Body of pancreas (tissue), 4 donors: ENCODE measurements at regions of chr1 and their contacts with region 1.

Region 1: GRCh38 chr1:1059494-1060280 is 14.4 kb downstream of the RNF223 start:
- DNase-seq: peak; percentile 91 to 95 (median 92)
- ATAC-seq: peak; percentile 86
- H3K4me3 ChIP-seq: peak overlapping the region in 1 of 2 donors; percentile 38
- H3K27ac ChIP-seq: no peak overlapping the region
- H3K4me1 ChIP-seq: peaks cover 37% of the 10 kb centered on the region
- H3K27me3 ChIP-seq: peaks cover 0 to 14% of the 10 kb centered on the region in 2 donors
- CTCF ChIP-seq: peak in 1 of 7 experiments; percentile 20
- POLR2A ChIP-seq: peak in 1 of 3 donors; percentile 26

Region 2: GRCh38 chr1:983799-984473 is 75.8 kb before region 1 on chr1:
- intact Hi-C with region 1: loop called (anchors 5 kb)
- DNase-seq: peak in 3 of 4 donors; percentile 50 to 65 (median 63)
- ATAC-seq: peak; percentile 76
- H3K4me3 ChIP-seq: no peak overlapping the region
- H3K27ac ChIP-seq: no peak overlapping the region
- H3K4me1 ChIP-seq: peaks cover 3% of the 10 kb centered on the region
- H3K27me3 ChIP-seq: peaks cover 0 to 4% of the 10 kb centered on the region in 2 donors
- CTCF ChIP-seq: peak; percentile 54 to 98 (median 69)
- POLR2A ChIP-seq: no peak